ENCODE measurements at regions of chr5 and their contacts with region 1.

Region 1: DNA sequence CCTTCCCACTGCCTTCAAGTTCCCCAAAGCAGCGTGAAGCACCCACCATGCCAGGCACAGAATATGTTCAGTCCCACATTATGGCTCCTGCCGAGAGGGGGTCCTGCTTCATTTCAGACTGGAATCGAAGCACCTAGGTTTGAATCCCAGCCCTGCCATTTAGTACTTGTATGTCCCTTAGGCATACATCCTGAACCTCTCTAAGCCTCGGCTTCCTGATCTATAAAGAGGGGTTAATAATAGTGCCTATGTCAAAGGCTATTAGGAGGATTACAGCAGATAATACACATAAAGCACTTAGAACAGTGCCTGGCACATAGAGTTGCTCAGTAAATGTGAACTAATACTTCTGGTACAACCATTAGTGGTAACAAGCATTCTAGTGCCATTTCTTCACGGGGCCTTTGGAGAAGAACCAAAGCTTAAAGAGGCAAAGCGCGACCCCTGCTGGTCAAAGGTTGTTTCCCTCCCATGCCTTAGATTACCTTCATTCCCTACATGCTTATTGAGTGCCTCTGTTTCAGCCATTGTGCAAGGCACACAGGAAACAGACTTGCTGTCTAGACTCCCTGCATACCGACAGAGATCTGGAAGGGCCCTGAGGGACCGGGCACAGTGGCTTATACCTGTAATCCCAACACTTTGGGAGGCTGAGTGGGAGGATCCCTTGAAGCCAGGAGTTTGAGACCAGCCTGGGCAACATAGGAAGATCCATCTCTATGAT is 98.2 kb downstream of the PPARGC1B start:
- DNase-seq: peak; percentile 84 to 93 (median 90)
- ATAC-seq: peak; percentile 67 to 69
- H3K4me3 ChIP-seq: no peak overlapping the region
- H3K27ac ChIP-seq: peak overlapping the region; percentile 36
- H3K4me1 ChIP-seq: peaks cover 21% of the 10 kb centered on the region
- H3K27me3 ChIP-seq: no peaks in the 10 kb centered on the region

Region 2: GRCh38 chr5:149719678-149720077 is 108.6 kb before region 1 on chr5:
- intact Hi-C with region 1: no loop called
- DNase-seq: no peak
- ATAC-seq: no peak
- H3K4me3 ChIP-seq: no peak overlapping the region
- H3K27ac ChIP-seq: no peak overlapping the region
- H3K4me1 ChIP-seq: no peaks in the 10 kb centered on the region
- H3K27me3 ChIP-seq: no peaks in the 10 kb centered on the region

Region 3: GRCh38 chr5:149731639-149732323 is 96.5 kb before region 1 on chr5:
- intact Hi-C with region 1: loop called in 3 of 4 experiments (anchors 5 to 10 kb)
- DNase-seq: peak; percentile 86 to 94 (median 93)
- ATAC-seq: peak; percentile 73 to 79
- H3K4me3 ChIP-seq: peak overlapping the region; percentile 76
- H3K27ac ChIP-seq: peak overlapping the region; percentile 73
- H3K4me1 ChIP-seq: no peaks in the 10 kb centered on the region
- H3K27me3 ChIP-seq: no peaks in the 10 kb centered on the region

Region 4: DNA sequence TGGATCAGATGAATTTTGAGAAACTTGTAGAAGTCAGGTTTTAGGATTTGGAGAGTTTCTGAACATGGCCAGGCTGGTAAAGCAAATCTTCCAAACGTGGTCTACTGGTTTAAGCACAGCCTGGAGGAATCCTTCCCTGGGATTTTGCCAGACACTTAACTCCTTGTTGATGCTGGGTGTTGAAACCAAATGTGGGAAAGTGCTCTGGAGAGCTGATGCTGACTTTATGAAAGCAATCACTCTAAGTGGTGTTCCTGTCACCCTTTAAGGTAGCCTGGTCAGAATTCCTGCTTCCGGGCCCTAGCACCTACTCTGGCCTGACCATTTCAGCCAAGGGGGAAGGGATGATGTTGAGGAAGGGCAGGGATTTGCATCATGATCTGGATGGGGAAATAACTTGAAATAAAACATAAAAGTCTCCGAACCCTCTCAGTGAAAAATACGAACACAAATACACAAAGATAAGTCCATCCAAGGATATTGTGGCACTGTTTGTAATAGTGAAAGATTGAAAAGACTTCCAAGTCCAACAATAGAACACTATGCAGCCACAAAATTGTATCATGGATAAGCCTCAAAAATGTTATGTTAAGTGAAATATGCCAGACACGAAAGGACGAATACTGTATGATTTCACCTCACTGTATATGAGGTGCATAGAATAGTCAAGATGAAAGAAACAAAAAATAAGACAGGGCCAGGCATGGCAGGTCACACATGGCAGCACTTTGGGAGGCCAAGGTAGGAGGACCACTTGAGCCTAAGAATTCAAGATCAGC is 58.6 kb after region 1 on chr5:
- intact Hi-C with region 1: no loop called
- DNase-seq: no peak
- ATAC-seq: no peak
- H3K4me3 ChIP-seq: no peak overlapping the region
- H3K27ac ChIP-seq: no peak overlapping the region
- H3K4me1 ChIP-seq: no peaks in the 10 kb centered on the region
- H3K27me3 ChIP-seq: no peaks in the 10 kb centered on the region